ENCODE measurements at regions of chr2 and their contacts with region 1.

Region 1: DNA sequence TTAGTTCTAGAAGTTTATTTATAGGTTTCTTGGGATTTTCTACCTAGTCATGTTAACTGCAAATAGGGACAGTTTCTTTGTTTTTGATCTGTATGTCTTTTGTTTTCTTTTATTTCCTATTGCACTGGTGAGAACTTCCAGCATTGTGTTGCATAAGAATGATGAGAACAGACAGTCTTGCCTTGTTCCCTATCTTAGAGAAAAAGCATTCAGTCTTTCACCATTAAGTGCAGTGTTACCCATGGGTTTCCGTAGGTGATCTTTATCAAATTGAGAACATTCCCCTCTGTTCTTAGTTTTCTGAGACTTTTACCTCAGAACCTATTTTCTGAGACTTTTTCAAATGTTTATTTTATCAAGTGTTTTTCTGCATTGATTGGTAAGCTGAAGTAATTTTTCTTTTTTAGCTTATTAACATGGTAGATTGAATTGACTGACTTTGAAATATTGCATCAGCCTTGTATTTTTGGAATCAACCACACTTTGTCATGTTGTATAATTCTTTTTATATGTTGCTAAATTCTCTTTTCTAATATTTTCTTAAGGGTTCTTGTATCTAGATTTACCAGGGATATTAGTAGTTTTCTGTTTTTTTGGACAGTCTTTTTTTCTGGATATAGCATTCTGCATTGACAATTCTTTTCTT is 17.2 kb downstream of the MFSD6 start:
- DNase-seq: no peak
- ATAC-seq: no peak
- H3K4me3 ChIP-seq: no peak overlapping the region
- H3K4me3 Mint-ChIP-seq: no peak overlapping the region
- H3K27ac ChIP-seq: no peak overlapping the region
- H3K27ac Mint-ChIP-seq: no peak overlapping the region
- H3K4me1 ChIP-seq: peaks cover 36% of the 10 kb centered on the region
- H3K4me1 Mint-ChIP-seq: peaks cover 74% of the 10 kb centered on the region
- H3K27me3 ChIP-seq: no peaks in the 10 kb centered on the region
- H3K27me3 Mint-ChIP-seq: no peaks in the 10 kb centered on the region
- CTCF ChIP-seq: no peak

Region 2: DNA sequence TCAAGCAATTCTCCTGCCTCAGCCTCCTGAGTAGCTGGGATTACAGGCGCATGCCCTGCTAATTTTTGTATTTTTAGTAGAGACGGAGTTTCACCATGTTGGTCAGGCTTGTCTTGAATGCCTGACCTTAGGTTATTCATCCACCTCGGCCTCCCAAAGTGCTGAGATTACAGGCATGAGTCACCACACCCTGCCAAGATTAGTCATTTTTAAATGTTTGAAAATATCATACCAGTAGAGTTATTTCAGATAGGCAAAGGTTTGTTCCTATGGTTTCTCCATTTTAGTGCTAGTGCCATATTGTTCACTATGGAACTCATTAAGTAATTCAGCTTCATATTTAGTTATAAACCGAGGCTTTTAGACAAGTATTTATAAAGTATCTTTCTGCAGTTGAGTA is 158.0 kb before region 1 on chr2:
- CTCF ChIA-PET with region 1: no interaction called
- POLR2A ChIA-PET with region 1: no interaction called
- intact Hi-C with region 1: no loop called
- DNase-seq: no peak
- ATAC-seq: no peak
- H3K4me3 ChIP-seq: no peak overlapping the region
- H3K4me3 Mint-ChIP-seq: no peak overlapping the region
- H3K27ac ChIP-seq: no peak overlapping the region
- H3K27ac Mint-ChIP-seq: no peak overlapping the region
- H3K4me1 ChIP-seq: no peaks in the 10 kb centered on the region
- H3K4me1 Mint-ChIP-seq: no peaks in the 10 kb centered on the region
- H3K27me3 ChIP-seq: no peaks in the 10 kb centered on the region
- H3K27me3 Mint-ChIP-seq: no peaks in the 10 kb centered on the region
- CTCF ChIP-seq: no peak

Region 3: GRCh38 chr2:190443778-190444481 is 18.6 kb after region 1 on chr2:
- CTCF ChIA-PET with region 1: no interaction called
- POLR2A ChIA-PET with region 1: no interaction called
- intact Hi-C with region 1: loop called in 1 of 2 experiments (anchors 2 kb)
- DNase-seq: no peak
- ATAC-seq: no peak
- H3K4me3 ChIP-seq: no peak overlapping the region
- H3K4me3 Mint-ChIP-seq: peak overlapping the region; percentile 23
- H3K27ac ChIP-seq: no peak overlapping the region
- H3K27ac Mint-ChIP-seq: peak overlapping the region; percentile 49
- H3K4me1 ChIP-seq: peaks cover 62% of the 10 kb centered on the region
- H3K4me1 Mint-ChIP-seq: peaks cover 85% of the 10 kb centered on the region
- H3K27me3 ChIP-seq: no peaks in the 10 kb centered on the region
- H3K27me3 Mint-ChIP-seq: no peaks in the 10 kb centered on the region
- CTCF ChIP-seq: no peak

Measured in CD8-positive, alpha-beta T cell (primary cell).